ENCODE measurements at regions of chr7 and their contacts with region 1.

Region 1: GRCh38 chr7:19982841-19983835 is 209.7 kb upstream of the TMEM196 start:
- DNase-seq: peak; percentile 7
- H3K4me3 ChIP-seq: no peak overlapping the region
- H3K27me3 ChIP-seq: no peaks in the 10 kb centered on the region
- CTCF ChIP-seq: peak; percentile 61

Region 2: DNA sequence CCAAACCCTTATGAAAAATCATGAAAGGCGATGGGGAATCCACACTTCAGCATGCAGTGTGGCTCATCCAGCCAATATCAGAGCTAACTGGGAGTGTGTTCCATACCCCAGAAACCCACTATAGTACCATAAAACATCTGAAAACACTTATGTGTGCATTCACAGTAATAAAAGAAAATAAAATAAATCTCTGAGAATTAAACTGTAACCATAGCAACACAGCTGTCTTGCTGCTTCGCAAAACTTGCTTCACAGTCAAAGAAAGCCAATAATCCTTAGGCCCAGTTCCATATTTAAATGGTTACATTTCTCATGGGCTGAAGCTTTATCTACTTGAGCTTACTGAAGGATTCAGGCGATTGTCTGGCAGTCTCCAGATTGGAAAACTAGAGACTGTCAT is 254.4 kb before region 1 on chr7:
- CTCF ChIA-PET with region 1: no interaction called
- POLR2A ChIA-PET with region 1: no interaction called
- DNase-seq: no peak
- H3K4me3 ChIP-seq: no peak overlapping the region
- H3K27me3 ChIP-seq: no peaks in the 10 kb centered on the region
- CTCF ChIP-seq: no peak

Region 3: GRCh38 chr7:19775578-19775977 is 207.6 kb before region 1 on chr7:
- CTCF ChIA-PET with region 1: no interaction called
- POLR2A ChIA-PET with region 1: no interaction called
- DNase-seq: no peak
- H3K4me3 ChIP-seq: no peak overlapping the region
- H3K27me3 ChIP-seq: peaks cover 8% of the 10 kb centered on the region
- CTCF ChIP-seq: no peak

Region 4: GRCh38 chr7:20172736-20173334 is 189.7 kb after region 1 on chr7:
- CTCF ChIA-PET with region 1: interaction called, 46 read pairs
- POLR2A ChIA-PET with region 1: no interaction called
- DNase-seq: no peak
- H3K4me3 ChIP-seq: no peak overlapping the region
- H3K27me3 ChIP-seq: no peaks in the 10 kb centered on the region
- CTCF ChIP-seq: peak; percentile 70

Region 5: DNA sequence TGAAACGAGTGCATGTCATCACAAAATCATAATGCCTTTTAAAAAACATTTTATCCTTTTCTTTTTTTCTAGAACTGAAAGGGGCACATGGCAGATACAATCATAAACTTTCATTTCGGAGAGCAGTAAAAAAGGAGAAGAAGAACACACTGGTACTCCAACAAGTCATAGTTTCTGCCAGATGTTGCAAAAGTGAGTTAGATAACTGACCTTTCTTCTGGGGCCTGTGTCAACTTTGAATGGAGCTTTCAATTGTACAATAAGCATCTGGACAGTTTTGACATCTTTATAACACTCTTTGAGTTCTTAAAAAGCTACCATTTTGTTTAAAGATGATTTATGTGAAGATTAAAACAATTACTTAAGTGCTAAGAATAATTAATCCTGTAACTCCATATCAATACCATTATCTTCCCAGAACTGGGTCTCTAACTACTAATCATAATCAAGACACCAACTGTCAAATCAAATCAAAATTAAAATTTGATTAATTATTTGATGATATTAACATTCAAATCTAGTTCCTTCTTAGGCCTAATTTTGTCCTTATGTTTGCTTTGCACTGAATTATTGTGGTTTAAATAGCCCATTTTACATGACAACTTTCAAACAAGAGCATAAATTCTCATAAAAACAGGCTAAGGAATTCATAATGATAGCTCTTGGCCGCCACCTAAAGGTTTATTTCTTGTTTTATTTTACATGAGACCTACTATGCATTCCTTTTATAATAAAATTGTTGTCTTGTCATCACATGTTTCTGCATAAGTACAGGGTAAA is 328.0 kb after region 1 on chr7:
- CTCF ChIA-PET with region 1: interaction called, 15 read pairs
- POLR2A ChIA-PET with region 1: no interaction called
- DNase-seq: peak; percentile 22
- H3K4me3 ChIP-seq: no peak overlapping the region
- H3K27me3 ChIP-seq: no peaks in the 10 kb centered on the region
- CTCF ChIP-seq: peak; percentile 40

Measured in BJ (cell line).